ENCODE measurements at regions of chr7 and their contacts with region 1.

Region 1: DNA sequence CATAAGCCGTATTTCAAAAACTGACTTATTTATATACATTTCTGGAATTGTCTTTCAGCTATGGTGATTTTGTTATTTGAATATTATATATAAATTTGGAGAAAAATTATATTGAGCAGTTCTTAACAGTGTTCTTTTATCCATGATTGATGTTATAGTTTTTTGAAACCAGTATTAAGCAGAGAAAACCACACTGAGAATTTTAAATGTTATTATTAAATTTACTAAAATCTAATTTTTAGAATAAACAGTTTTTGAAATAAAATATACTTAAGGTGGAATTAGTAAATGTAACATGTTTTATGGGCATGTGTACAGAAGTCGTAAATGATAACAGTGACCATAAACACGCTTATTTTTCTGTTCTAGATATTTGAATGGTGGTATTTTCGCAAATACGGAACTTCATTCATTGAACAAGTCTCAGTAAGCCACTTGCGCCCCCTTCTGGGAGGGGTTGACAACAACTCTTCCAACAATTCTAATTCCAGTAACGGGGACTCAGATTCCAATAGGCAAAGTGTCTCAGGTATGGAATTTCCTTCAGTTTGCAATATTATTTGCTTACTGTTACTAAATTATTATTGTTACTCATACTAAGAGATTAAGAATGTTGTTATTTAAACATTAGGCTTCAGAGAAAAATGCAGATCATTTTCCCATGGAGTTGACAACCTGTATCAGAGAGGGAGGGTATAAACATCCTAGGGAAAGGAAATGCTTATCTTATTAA is 166.1 kb downstream of the ST7 start:
- DNase-seq: peak; percentile 79 to 89
- H3K4me3 ChIP-seq: no peak overlapping the region
- H3K27ac ChIP-seq: no peak overlapping the region
- H3K4me1 ChIP-seq: peaks cover 0 to 1% of the 10 kb centered on the region in 2 donors
- H3K27me3 ChIP-seq: no peaks in the 10 kb centered on the region
- CTCF ChIP-seq: peak; percentile 59 to 91 (median 84)
- POLR2A ChIP-seq: no peak

Region 2: DNA sequence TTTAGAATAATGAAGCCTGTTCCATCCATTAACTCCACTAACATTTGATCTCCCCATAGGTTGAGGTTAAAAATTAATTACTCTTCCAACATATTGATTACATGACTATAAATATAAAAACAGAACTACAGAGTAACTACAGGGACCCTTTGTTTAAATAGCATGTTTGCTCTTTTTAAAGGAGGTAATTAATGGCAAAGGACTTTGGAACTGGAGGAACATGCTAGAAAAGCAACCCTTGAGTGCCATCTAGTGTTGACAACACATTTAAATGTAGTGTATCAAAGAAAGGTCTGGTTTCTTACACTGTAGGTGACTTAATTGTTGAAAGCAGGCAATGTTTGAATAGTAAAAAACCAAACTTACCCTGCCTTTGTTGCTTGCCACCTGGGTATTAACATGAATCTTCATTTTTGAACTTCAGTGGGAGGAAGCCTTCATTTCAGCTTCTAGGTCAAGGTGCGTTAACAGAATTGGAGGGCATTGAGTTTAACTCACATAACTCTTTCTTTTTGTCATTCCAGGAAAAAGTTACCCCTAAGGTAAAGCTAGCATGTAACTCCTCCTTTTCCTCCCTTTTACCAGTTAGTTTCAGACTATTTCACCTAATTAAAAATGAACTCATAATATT is 309.6 kb before region 1 on chr7:
- intact Hi-C with region 1: no loop called
- DNase-seq: no peak
- H3K4me3 ChIP-seq: no peak overlapping the region
- H3K27ac ChIP-seq: no peak overlapping the region
- H3K4me1 ChIP-seq: peaks cover 3 to 4% of the 10 kb centered on the region in 2 donors
- H3K27me3 ChIP-seq: no peaks in the 10 kb centered on the region
- CTCF ChIP-seq: peak in 4 of 6 experiments; percentile 43 to 84 (median 66)
- POLR2A ChIP-seq: no peak

Region 3: DNA sequence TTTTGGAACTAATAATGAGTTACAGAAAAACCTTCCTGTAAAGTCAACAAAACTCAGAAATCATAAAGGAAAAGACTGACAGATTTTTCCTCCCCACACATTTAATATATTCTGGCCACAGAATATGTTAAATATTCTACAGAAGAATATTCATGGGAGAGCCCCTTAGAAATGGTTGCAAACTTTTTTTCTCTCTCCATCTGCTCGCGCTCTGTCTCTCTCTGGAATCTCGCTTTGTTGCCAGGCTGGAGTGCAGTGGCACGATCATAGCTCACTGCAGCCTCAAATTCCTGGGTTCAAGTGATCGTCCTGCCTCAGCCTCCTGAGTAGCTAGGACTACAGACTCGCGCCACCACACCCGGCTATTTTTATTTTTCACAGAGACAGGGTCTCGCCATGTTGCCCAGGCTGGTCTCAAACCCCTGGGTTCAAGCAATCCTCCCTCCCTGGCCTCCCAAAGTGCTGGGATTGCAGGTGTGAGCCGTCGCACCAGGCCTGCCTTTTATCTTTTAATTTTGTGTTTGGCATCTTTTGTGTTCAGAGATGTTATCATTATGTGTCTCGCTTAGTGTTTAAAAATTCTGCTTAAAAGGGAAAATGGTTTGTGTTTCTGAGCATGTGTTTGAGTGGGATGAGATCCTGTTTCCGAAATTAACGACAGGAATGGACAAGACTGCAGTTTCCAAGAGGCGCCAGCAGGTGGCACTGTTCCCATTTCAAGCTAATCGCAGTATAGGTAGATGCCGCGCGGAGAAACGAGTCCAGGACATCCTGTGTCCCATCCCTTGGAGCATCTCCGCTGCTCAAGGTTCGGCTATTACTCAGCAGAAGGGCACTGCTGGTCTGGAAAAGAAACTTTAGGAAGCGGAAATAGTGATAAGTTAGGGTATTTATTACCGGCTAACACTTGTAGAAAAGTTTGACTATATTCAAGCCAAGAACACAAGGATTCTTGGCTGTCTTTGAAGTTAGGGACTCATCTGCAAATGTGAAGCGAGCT is 189.1 kb before region 1 on chr7:
- intact Hi-C with region 1: loop called (anchors 2 kb)
- DNase-seq: peak; percentile 84 to 89
- H3K4me3 ChIP-seq: no peak overlapping the region
- H3K27ac ChIP-seq: no peak overlapping the region
- H3K4me1 ChIP-seq: peaks cover 0 to 6% of the 10 kb centered on the region in 2 donors
- H3K27me3 ChIP-seq: no peaks in the 10 kb centered on the region
- CTCF ChIP-seq: peak; percentile 87 to 95 (median 90)
- POLR2A ChIP-seq: no peak

Region 4: DNA sequence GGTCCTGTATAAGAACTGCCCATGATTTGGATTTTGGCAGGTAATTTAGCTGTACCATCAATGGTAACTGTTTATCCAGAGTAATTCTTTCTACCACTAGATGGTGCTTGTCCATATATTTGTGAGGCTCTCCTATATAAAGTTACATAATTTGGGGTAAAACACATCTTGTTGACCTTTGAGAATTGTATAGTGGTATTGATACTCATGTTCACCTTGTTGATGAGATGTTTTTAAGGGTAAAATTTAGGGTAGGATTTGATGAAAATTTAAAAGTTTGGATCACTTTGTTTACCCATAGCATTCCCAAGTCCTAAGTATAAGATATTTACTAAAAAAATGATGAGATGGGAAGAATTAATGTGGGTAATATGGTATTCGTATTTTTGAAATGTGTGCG is 134.4 kb before region 1 on chr7:
- intact Hi-C with region 1: loop called (anchors 5 kb)
- DNase-seq: no peak
- H3K4me3 ChIP-seq: no peak overlapping the region
- H3K27ac ChIP-seq: no peak overlapping the region
- H3K4me1 ChIP-seq: no peaks in the 10 kb centered on the region
- H3K27me3 ChIP-seq: no peaks in the 10 kb centered on the region
- CTCF ChIP-seq: peak; percentile 19 to 65 (median 48)
- POLR2A ChIP-seq: no peak